ENCODE measurements at regions of chr11 and their contacts with region 1.

Region 1: DNA sequence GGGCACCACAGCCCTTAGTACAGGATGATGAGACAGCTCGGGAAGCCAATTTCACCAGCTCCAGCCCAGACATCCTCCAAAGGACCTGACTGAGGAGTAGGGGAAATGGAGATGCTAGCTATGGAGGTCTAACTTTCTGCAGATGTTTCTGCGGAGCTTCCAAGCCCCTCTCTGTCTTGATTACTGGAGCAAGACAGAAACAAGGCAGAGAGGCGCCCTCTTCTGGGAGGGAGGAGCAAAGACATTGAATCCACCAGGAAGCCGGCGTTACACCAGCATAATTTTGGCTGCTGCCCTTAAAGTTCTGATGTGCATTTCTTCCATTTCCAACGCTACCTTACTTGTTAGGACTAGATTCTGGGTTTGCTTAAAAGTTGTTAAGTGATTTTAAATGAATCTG is 107.3 kb upstream of the HSD17B12 start:
- DNase-seq: peak; percentile 43 to 60 (median 45)
- ATAC-seq: peak; percentile 76
- H3K4me3 ChIP-seq: no peak overlapping the region
- H3K27ac ChIP-seq: no peak overlapping the region
- H3K4me1 ChIP-seq: peaks cover 0 to 6% of the 10 kb centered on the region in 2 experiments; a peak in 2 of 5 replicates
- H3K27me3 ChIP-seq: peaks cover 21 to 46% of the 10 kb centered on the region in 2 experiments
- CTCF ChIP-seq: peak; percentile 59 to 79 (median 71)
- EP300 ChIP-seq: no peak
- POLR2A ChIP-seq: no peak
- RAD21 ChIP-seq: peak; percentile 44 to 67

Region 2: DNA sequence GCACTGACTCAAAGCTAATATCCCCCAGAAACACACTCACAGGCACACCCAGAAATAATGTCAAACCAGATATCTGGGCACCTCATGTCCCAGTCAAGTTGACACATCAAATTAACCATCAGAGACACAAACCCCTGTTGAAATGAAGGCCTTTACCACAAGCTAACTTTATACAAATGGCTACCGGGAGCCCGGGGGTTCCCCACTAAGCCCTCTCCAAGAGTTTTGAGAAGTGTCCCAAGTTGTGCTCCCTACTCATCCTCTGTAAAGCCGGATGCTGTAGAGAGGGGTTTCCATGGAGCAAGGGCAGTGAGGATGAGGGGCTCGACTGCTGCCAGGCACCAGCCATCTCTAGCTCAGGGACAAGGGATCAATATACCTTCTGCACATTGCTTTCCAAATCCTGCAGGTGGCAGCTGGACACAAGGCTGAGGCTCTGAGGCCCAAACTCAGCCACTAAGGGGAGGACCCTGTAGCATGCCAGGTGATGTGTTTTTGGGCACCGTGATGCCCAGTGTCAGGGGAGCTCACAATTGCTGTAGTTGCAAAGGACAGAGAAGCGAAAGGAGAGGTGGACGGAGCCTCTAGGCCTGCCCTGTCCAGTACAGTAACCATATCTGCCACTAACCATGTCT is 68.8 kb before region 1 on chr11:
- CTCF ChIA-PET with region 1: interaction called, 10 read pairs
- POLR2A ChIA-PET with region 1: no interaction called
- in situ Hi-C with region 1: no loop called
- intact Hi-C with region 1: no loop called
- DNase-seq: peak in 2 of 4 experiments; percentile 26 to 37
- ATAC-seq: peak; percentile 76
- H3K4me3 ChIP-seq: no peak overlapping the region
- H3K27ac ChIP-seq: no peak overlapping the region
- H3K4me1 ChIP-seq: no peaks in the 10 kb centered on the region
- H3K27me3 ChIP-seq: peaks cover 4 to 27% of the 10 kb centered on the region in 2 experiments; a peak in 4 of 5 replicates
- CTCF ChIP-seq: peak; percentile 45 to 55 (median 53)
- EP300 ChIP-seq: no peak
- POLR2A ChIP-seq: no peak
- RAD21 ChIP-seq: peak; percentile 60 to 70